ENCODE measurements at regions of chr15 and their contacts with region 1.

Region 1: DNA sequence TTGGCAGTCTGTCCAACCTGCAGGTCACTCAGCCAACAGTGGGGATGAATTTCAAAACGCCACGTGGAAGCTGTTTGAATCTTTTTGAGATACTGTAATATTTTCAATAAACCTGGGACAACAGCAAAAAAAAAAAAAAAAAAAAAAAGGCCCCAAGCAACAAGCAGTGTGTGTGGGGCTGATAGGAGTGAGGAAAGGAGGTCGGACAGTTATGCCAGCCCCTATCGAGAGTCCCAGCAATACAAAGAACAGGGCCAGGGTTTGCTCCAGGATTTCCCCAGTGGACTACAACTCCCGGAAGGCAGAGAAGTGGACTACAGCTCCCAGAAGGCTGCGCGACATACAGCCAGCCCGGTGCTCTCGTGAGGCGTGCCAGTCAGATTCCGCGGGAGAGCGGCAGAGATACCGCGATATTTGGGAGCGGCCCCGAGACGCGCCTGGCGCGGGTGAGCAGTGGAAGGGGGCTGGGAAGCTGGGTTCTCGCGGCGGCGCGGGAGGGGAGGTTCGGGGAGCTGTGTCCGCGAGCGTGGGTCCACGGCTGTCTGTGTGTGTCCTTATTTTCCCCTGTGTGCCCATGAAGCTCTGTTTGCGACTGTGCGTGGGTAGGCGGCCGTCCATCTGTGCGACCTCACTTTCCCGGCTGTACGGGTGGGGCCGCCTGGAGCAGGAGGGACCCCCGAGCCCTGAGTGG is at the start of gene PPCDC:
- DNase-seq: peak; percentile 94
- H3K4me3 Mint-ChIP-seq: peak within 1 kb of the TSS; percentile 96
- H3K27ac Mint-ChIP-seq: peak within 1 kb of the TSS; percentile 94
- H3K4me1 Mint-ChIP-seq: peaks cover 10% of the 10 kb centered on the region
- H3K27me3 Mint-ChIP-seq: no peaks in the 10 kb centered on the region
- total RNA-seq, gene PPCDC: 28.4 and 31.0 TPM in 2 replicates

Region 2: GRCh38 chr15:74857082-74857655 is 166.2 kb before region 1 on chr15:
- intact Hi-C with region 1: no loop called
- DNase-seq: no peak
- H3K4me3 Mint-ChIP-seq: no peak overlapping the region
- H3K27ac Mint-ChIP-seq: peak overlapping the region; percentile 36
- H3K4me1 Mint-ChIP-seq: peaks cover 28% of the 10 kb centered on the region
- H3K27me3 Mint-ChIP-seq: no peaks in the 10 kb centered on the region

Region 3: GRCh38 chr15:74956648-74957300 is 66.6 kb before region 1 on chr15 and contains the start of gene RPP25:
- intact Hi-C with region 1: loop called (anchors 5 kb)
- DNase-seq: peak; percentile 67
- H3K4me3 Mint-ChIP-seq: peak within 1 kb of the TSS; percentile 64
- H3K27ac Mint-ChIP-seq: no peak within 1 kb of the TSS
- H3K4me1 Mint-ChIP-seq: peaks cover 32% of the 10 kb centered on the region
- H3K27me3 Mint-ChIP-seq: peaks cover 39% of the 10 kb centered on the region
- total RNA-seq, gene RPP25: 13.1 and 14.2 TPM in 2 replicates

Region 4: GRCh38 chr15:75067123-75067830 is 44.0 kb after region 1 on chr15:
- intact Hi-C with region 1: loop called (anchors 1 kb)
- DNase-seq: peak; percentile 72
- H3K4me3 Mint-ChIP-seq: peak overlapping the region; percentile 70
- H3K27ac Mint-ChIP-seq: peak overlapping the region; percentile 97
- H3K4me1 Mint-ChIP-seq: peaks cover 79% of the 10 kb centered on the region
- H3K27me3 Mint-ChIP-seq: no peaks in the 10 kb centered on the region

Measured in activated T-helper 2 cell treated with anti-CD3 and anti-CD28 coated beads, Interferon-gamma antibody, Interleukin-2, Interleukin-4, amounts not matched to agents 10 μg/mL and 5 μg/mL and 100 μg/mL, durations not matched to agents 14 hours and 24 hours and 36 hours (primary cell).